Mammary epithelial cell (primary cell): ENCODE measurements at regions of chr12 and their contacts with region 1.

Region 1: GRCh38 chr12:14514154-14514842 is 53.4 kb downstream of the PLBD1 start:
- DNase-seq: peak; percentile 84
- H3K4me3 ChIP-seq: no peak overlapping the region
- H3K27ac ChIP-seq: peak overlapping the region; percentile 75
- H3K4me1 ChIP-seq: peaks cover 16% of the 10 kb centered on the region
- H3K27me3 ChIP-seq: no peaks in the 10 kb centered on the region
- CTCF ChIP-seq: peak; percentile 78

Region 2: DNA sequence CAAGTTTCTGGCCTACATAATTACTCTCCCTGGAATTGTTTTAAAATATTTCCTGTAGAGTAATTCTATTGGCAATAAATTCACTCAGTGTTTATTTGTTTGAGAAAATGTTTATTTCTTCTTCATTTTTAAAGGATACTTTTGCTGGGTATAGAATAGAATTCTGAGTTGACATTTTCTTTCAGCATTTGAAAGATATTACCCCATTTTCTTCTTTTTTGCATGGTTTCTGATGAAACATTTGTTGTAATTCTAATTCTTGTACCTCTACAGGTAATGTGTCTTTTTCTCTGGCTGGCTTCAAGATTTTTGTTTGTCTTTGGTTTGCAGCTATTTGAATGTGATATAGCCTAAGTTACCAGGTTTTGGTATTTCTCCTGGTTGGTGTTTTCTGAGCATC is 173.9 kb before region 1 on chr12:
- CTCF ChIA-PET with region 1: no interaction called
- dilution Hi-C with region 1: no loop called
- in situ Hi-C with region 1: no loop called
- intact Hi-C with region 1: no loop called
- DNase-seq: no peak
- H3K4me3 ChIP-seq: no peak overlapping the region
- H3K27ac ChIP-seq: no peak overlapping the region
- H3K4me1 ChIP-seq: no peaks in the 10 kb centered on the region
- H3K27me3 ChIP-seq: no peaks in the 10 kb centered on the region
- CTCF ChIP-seq: no peak

Region 3: DNA sequence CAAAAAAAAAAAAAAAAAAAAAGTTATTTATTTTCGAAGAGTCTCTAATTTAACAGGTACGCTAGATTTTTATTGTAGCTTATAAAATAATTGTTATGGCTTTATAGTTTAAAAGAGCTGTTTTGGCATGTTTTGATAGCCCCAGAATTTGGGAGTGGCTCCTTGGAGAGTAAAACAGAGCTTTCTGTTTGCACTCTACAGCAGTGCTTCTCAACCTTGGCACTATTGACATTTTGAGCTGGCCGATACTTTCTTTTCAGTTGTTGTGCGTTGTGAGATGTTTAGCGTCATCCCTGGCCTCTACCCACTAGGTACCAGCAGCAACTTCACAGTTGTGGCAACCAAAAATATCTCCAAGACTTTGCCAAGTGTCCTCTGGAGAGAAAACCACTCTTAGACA is 22.8 kb after region 1 on chr12:
- CTCF ChIA-PET with region 1: no interaction called
- dilution Hi-C with region 1: no loop called
- in situ Hi-C with region 1: no loop called
- intact Hi-C with region 1: no loop called
- DNase-seq: no peak
- H3K4me3 ChIP-seq: no peak overlapping the region
- H3K27ac ChIP-seq: no peak overlapping the region
- H3K4me1 ChIP-seq: no peaks in the 10 kb centered on the region
- H3K27me3 ChIP-seq: no peaks in the 10 kb centered on the region
- CTCF ChIP-seq: no peak

Region 4: DNA sequence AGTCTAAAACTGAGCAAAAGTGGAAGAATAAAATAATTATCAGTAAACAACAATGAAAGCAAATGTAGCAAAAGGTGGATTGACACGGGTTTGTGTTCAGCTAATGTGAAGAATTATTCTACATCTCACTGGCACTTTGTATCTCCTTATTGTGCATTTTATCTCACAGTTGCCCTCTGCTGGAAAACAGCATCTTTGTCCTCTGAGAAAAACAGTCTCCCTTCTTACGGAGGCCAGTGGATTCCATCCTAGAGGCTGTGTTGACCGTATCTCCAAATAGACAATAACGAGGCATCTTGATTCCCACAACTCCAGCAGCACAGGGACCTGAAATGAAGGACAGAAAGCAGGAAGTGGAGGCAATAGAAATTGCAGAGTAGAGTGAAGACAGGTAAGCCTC is 104.7 kb after region 1 on chr12:
- CTCF ChIA-PET with region 1: no interaction called
- dilution Hi-C with region 1: no loop called
- in situ Hi-C with region 1: no loop called
- intact Hi-C with region 1: loop called (anchors 1 kb)
- DNase-seq: peak; percentile 24
- H3K4me3 ChIP-seq: no peak overlapping the region
- H3K27ac ChIP-seq: no peak overlapping the region
- H3K4me1 ChIP-seq: no peaks in the 10 kb centered on the region
- H3K27me3 ChIP-seq: no peaks in the 10 kb centered on the region
- CTCF ChIP-seq: peak; percentile 41 to 64

Region 5: DNA sequence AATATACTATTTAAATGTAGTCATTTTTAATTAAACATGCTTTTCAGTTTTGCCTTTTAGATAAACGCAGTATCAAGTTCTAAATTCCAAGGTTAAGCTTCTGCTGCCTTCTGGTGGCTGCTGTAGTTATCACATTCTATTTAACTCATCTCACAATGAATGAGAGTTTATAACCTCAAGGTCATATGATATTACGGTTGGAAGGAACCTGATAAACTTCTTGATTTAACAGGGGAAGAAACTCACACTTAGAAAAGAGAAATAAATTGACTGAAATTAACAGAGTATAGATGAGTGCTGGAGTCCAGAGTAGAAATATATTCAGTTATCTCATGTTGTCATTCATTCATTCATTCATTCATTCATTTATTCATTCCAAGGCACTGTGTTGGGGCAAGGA is 150.2 kb after region 1 on chr12:
- CTCF ChIA-PET with region 1: no interaction called
- dilution Hi-C with region 1: no loop called
- in situ Hi-C with region 1: no loop called
- intact Hi-C with region 1: loop called (anchors 2 kb)
- DNase-seq: peak; percentile 23
- H3K4me3 ChIP-seq: no peak overlapping the region
- H3K27ac ChIP-seq: no peak overlapping the region
- H3K4me1 ChIP-seq: no peaks in the 10 kb centered on the region
- H3K27me3 ChIP-seq: peaks cover 1% of the 10 kb centered on the region
- CTCF ChIP-seq: peak; percentile 54 to 68

Region 6: DNA sequence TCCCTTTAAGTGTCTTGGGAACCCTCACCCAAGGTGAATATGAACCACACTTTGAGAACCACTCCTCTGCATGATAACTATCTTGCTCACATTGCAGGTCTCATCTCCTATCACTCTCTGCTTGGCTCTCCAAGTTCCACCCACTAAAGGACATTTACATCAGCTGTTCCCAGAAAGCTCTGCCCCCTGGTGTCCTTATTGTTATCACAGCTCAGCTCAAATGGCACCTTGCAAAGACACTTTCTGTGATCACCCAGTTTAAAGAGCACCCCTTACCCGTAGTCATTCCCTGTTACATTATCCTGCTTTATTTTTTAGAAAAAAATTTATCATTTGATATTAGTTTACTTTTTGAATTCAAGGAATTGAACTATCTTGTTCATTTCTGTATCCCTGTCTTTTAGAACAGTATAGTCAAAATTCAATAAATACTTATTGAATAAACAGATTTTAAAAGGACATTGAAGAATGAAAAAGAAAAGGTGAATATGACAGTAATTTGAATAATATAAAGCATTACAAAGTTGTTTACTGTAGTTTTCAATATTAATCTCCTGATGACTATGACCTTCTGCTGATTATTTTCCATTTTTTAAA is 202.6 kb after region 1 on chr12:
- CTCF ChIA-PET with region 1: interaction called, 16 read pairs
- dilution Hi-C with region 1: no loop called
- in situ Hi-C with region 1: no loop called
- intact Hi-C with region 1: loop called (anchors 2 kb)
- DNase-seq: peak; percentile 42
- H3K4me3 ChIP-seq: no peak overlapping the region
- H3K27ac ChIP-seq: no peak overlapping the region
- H3K4me1 ChIP-seq: no peaks in the 10 kb centered on the region
- H3K27me3 ChIP-seq: no peaks in the 10 kb centered on the region
- CTCF ChIP-seq: peak; percentile 34 to 59